ENCODE measurements at regions of chr2 and their contacts with region 1.

Region 1: GRCh38 chr2:23926750-23927571 is at the start of gene ATAD2B:
- DNase-seq: peak; percentile 90 to 97
- ATAC-seq: peak; percentile 89 to 96
- H3K4me3 ChIP-seq: peak within 1 kb of the TSS; percentile 75
- H3K27ac ChIP-seq: peak within 1 kb of the TSS; percentile 93 to 95
- H3K4me1 ChIP-seq: peaks cover 20% of the 10 kb centered on the region; the same call in 2 of the 3 replicates
- CTCF ChIP-seq: peak; percentile 96
- EP300 ChIP-seq: no peak
- POLR2A ChIP-seq: peak; percentile 80
- RAD21 ChIP-seq: peak; percentile 77 to 93
- polyA plus RNA-seq, gene ATAD2B: 8.7 and 13.1 TPM in 2 replicates

Region 2: DNA sequence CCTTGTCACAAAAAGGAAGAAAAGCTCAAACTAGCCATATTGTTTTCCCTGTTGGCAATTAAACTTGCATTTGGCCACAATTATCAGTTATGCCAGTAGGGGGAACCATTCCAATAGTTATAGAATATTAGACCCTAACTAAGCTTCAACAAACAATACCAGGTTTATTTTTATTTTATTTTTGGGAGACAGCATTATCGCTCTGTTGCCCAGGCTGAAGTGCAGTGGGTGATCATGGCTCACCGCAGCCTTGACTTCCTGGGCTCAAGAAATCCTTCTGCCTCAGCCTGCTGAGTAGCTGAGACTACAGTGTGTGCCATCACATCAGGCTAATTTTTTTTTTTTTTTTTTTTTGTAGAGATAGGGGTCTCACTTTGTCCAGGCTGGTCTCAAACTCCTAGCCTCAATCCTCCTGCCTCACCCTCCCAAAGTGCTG is 102.2 kb before region 1 on chr2:
- CTCF ChIA-PET with region 1: interaction called, 57 read pairs
- POLR2A ChIA-PET with region 1: interaction called, 18 read pairs
- DNase-seq: peak; percentile 43 to 60
- ATAC-seq: peak; percentile 79 to 87
- H3K4me3 ChIP-seq: no peak overlapping the region
- H3K27ac ChIP-seq: no peak overlapping the region
- H3K4me1 ChIP-seq: peaks cover 27% of the 10 kb centered on the region
- CTCF ChIP-seq: peak; percentile 88
- EP300 ChIP-seq: no peak
- POLR2A ChIP-seq: no peak
- RAD21 ChIP-seq: peak; percentile 80 to 83

Region 3: DNA sequence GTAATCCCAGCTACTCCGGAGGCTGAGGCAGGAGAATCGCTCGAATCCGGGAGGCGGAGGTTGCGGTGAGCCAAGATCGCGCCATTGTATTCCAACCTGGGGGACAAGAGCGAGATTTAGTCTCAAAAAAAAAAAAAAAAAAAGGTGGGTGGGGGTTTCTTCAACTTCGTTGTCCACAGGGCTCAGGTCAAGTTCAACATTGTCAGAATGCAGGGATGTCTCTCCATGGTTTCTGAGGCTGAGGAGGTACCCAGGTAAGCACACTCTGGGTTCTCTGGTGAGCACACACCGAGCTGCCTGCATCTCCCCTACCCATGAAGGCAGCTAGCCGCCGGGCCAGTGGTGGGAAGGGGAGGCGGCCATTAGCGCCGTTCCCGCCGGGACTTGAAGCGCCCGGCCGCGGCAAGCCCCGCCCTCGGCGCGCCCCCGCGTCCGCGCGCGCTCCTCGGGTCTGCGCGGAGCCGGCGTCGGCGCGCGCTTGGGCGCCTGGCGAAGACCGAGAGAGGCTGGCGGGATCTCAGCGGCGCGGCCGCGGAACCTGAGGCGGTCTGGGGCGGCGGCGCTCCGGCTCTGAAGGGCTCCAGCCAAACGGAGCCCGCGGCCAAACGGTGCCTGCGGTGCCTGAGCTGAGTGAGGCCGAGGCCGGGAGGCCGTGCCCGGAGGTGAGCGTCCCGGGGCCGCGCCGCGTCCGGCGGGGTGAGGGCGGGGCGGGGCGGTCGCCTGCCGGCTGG is 13.2 kb after region 1 on chr2 and contains the start of gene UBXN2A:
- CTCF ChIA-PET with region 1: interaction called, 37 read pairs
- POLR2A ChIA-PET with region 1: interaction called, 43 read pairs
- DNase-seq: peak; percentile 85 to 89
- ATAC-seq: peak; percentile 88 to 90
- H3K4me3 ChIP-seq: peak within 1 kb of the TSS; percentile 63
- H3K27ac ChIP-seq: peak within 1 kb of the TSS; percentile 96 to 98
- H3K4me1 ChIP-seq: peaks cover 23% of the 10 kb centered on the region
- CTCF ChIP-seq: no peak
- EP300 ChIP-seq: no peak
- POLR2A ChIP-seq: peak; percentile 85
- RAD21 ChIP-seq: no peak; a peak in 1 of 5 replicates
- polyA plus RNA-seq, gene UBXN2A: 18.3 and 25.4 TPM in 2 replicates

Region 4: GRCh38 chr2:24015562-24016346 is 88.8 kb after region 1 on chr2:
- CTCF ChIA-PET with region 1: interaction called, 16 read pairs
- POLR2A ChIA-PET with region 1: interaction called, 19 read pairs
- DNase-seq: peak; percentile 77 to 95
- ATAC-seq: peak; percentile 91 to 92
- H3K4me3 ChIP-seq: peak overlapping the region; percentile 12; the same call in 1 of the 3 replicates
- H3K27ac ChIP-seq: peak overlapping the region; percentile 89 to 94
- H3K4me1 ChIP-seq: peaks cover 64% of the 10 kb centered on the region
- CTCF ChIP-seq: no peak
- EP300 ChIP-seq: peak; percentile 76 to 77; a peak in 3 of 5 replicates
- POLR2A ChIP-seq: 0 out of 2 replicates have a peak, but pooled peaks have one; percentile 6
- RAD21 ChIP-seq: peak; percentile 42 to 43; a peak in 4 of 5 replicates

Region 5: GRCh38 chr2:24046930-24047702 is 120.2 kb after region 1 on chr2 and contains the start of gene WDCP:
- CTCF ChIA-PET with region 1: interaction called, 16 read pairs
- POLR2A ChIA-PET with region 1: interaction called, 27 read pairs
- DNase-seq: peak; percentile 93 to 99
- ATAC-seq: peak; percentile 92 to 98
- H3K4me3 ChIP-seq: peak within 1 kb of the TSS; percentile 66
- H3K27ac ChIP-seq: peak within 1 kb of the TSS; percentile 70 to 85
- H3K4me1 ChIP-seq: peaks cover 24% of the 10 kb centered on the region
- CTCF ChIP-seq: no peak
- EP300 ChIP-seq: no peak
- POLR2A ChIP-seq: peak; percentile 90
- RAD21 ChIP-seq: no peak
- polyA plus RNA-seq, gene WDCP: 20.8 and 30.1 TPM in 2 replicates

Region 6: DNA sequence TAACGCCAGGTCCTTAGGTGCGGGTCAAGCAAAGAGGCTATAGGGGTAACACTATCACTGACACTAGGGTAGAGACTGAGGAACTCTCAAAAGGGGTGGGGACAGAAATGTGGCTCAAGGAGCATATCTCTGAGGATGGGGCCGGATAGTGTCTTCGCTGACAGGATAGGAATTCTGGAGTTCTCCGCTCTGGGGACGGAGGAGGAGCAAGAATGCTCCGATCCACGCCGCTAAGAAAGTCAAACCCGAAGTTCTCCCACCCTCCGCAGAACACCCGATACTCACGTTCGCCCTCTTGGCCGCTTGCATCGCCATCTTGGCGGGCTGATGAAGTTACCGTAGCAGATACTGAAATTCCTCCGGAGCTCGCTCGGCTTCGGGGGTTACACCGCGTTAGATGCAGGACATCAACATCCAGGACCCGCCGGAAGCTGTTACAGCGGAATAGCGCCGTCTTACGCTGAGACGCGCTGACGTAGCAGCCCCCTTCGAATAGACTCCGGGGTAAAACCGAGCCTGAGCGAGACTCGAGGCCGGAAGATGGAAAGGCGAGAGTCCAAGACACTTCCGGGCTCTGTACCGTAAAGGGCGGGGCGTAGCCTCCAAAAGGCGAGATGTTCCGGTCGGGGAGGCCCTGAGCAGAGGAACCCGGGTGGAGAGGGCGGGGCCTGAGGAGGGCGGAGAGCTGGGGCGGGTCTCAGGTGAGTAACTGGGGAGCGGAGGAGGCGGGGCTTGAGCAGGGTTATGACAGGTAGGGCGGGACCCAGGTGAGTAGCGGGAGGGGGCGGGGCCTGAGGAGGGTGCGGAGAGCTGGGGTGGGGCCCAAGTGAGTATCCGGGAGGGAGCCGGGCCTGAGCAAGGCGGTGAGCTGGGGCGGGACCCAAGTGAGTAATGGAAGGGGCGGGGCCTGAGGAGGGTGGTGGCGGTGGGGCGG is 149.2 kb after region 1 on chr2 and contains the start of gene SF3B6:
- CTCF ChIA-PET with region 1: interaction called, 90 read pairs
- POLR2A ChIA-PET with region 1: interaction called, 99 read pairs
- DNase-seq: peak; percentile 92 to 99
- ATAC-seq: peak; percentile 91 to 94
- H3K4me3 ChIP-seq: peak within 1 kb of the TSS; percentile 82
- H3K27ac ChIP-seq: peak within 1 kb of the TSS; percentile 84 to 85
- H3K4me1 ChIP-seq: peaks cover 19% of the 10 kb centered on the region
- CTCF ChIP-seq: no peak
- EP300 ChIP-seq: no peak
- POLR2A ChIP-seq: peak; percentile 88
- RAD21 ChIP-seq: peak; percentile 28 to 31; a peak in 3 of 5 replicates
- polyA plus RNA-seq, gene SF3B6: 296 and 315 TPM in 2 replicates